HepG2 (cell line): ENCODE measurements at regions of chr18 and their contacts with region 1.

Region 1: GRCh38 chr18:58015065-58015780 is 28.8 kb upstream of the NEDD4L start:
- DNase-seq: no peak
- ATAC-seq: no peak
- H3K4me3 ChIP-seq: no peak overlapping the region
- H3K27ac ChIP-seq: peak overlapping the region; percentile 70
- H3K4me1 ChIP-seq: peaks cover 94% of the 10 kb centered on the region
- H3K27me3 ChIP-seq: no peaks in the 10 kb centered on the region
- CTCF ChIP-seq: no peak
- EP300 ChIP-seq: no peak
- POLR2A ChIP-seq: no peak
- RAD21 ChIP-seq: no peak

Region 2: GRCh38 chr18:56382541-56382940 is 1632.7 kb before region 1 on chr18:
- CTCF ChIA-PET with region 1: no interaction called
- POLR2A ChIA-PET with region 1: no interaction called
- in situ Hi-C with region 1: no loop called
- intact Hi-C with region 1: no loop called
- DNase-seq: no peak
- ATAC-seq: no peak
- H3K4me3 ChIP-seq: no peak overlapping the region
- H3K27ac ChIP-seq: no peak overlapping the region
- H3K4me1 ChIP-seq: no peaks in the 10 kb centered on the region
- H3K27me3 ChIP-seq: no peaks in the 10 kb centered on the region; a peak in 1 of 5 replicates
- CTCF ChIP-seq: no peak
- EP300 ChIP-seq: no peak
- POLR2A ChIP-seq: no peak
- RAD21 ChIP-seq: no peak

Region 3: GRCh38 chr18:57970356-57971080 is 44.7 kb before region 1 on chr18:
- CTCF ChIA-PET with region 1: no interaction called
- POLR2A ChIA-PET with region 1: no interaction called
- in situ Hi-C with region 1: no loop called
- intact Hi-C with region 1: loop called (anchors 5 kb)
- DNase-seq: peak; percentile 37
- ATAC-seq: peak; percentile 71
- H3K4me3 ChIP-seq: no peak overlapping the region
- H3K27ac ChIP-seq: no peak overlapping the region
- H3K4me1 ChIP-seq: peaks cover 43% of the 10 kb centered on the region
- H3K27me3 ChIP-seq: no peaks in the 10 kb centered on the region
- CTCF ChIP-seq: peak; percentile 61
- EP300 ChIP-seq: no peak
- POLR2A ChIP-seq: no peak
- RAD21 ChIP-seq: peak; percentile 45; the same call in 1 of the 2 replicates

Region 4: GRCh38 chr18:58004317-58004716 is 10.9 kb before region 1 on chr18:
- CTCF ChIA-PET with region 1: no interaction called
- POLR2A ChIA-PET with region 1: interaction called, 11 read pairs
- in situ Hi-C with region 1: no loop called
- intact Hi-C with region 1: no loop called
- DNase-seq: peak; percentile 61
- ATAC-seq: no peak
- H3K4me3 ChIP-seq: no peak overlapping the region
- H3K27ac ChIP-seq: no peak overlapping the region
- H3K4me1 ChIP-seq: peaks cover 19% of the 10 kb centered on the region
- H3K27me3 ChIP-seq: no peaks in the 10 kb centered on the region
- CTCF ChIP-seq: no peak
- EP300 ChIP-seq: peak in 1 of 2 experiments; percentile 34; a peak in 1 of 4 replicates
- POLR2A ChIP-seq: no peak
- RAD21 ChIP-seq: no peak